Activated CD4-positive, alpha-beta memory T cell treated with anti-CD3 and anti-CD28 coated beads for 36 hours (primary cell): ENCODE measurements at regions of chr1 and their contacts with region 1.

Region 1: DNA sequence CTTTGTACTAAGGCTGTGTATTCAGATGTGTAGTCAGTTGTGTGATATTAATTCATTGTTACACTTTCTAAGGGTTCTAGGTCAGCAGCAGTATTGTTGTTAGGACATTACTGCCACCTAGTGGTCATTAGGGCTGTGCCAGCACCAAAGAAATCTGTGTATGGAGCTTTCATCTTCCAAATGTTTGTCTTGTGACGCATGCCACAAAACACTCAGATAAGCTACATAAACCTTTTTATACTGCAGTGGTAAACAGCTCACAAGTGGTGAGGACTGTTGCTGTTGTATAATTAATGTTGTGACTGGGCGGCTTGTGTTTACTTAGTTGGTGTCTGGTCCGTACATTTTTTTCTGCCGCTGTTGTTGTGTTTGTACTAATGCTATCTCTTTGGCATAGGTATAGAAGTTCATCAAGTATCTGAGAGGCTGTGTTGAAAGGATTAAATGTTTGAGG is 51.7 kb downstream of the S1PR1 start:
- DNase-seq: peak; percentile 78
- H3K4me3 Mint-ChIP-seq: no peak overlapping the region
- H3K27ac Mint-ChIP-seq: peak overlapping the region; percentile 66
- H3K4me1 Mint-ChIP-seq: peaks cover 80% of the 10 kb centered on the region
- H3K27me3 Mint-ChIP-seq: no peaks in the 10 kb centered on the region

Region 2: DNA sequence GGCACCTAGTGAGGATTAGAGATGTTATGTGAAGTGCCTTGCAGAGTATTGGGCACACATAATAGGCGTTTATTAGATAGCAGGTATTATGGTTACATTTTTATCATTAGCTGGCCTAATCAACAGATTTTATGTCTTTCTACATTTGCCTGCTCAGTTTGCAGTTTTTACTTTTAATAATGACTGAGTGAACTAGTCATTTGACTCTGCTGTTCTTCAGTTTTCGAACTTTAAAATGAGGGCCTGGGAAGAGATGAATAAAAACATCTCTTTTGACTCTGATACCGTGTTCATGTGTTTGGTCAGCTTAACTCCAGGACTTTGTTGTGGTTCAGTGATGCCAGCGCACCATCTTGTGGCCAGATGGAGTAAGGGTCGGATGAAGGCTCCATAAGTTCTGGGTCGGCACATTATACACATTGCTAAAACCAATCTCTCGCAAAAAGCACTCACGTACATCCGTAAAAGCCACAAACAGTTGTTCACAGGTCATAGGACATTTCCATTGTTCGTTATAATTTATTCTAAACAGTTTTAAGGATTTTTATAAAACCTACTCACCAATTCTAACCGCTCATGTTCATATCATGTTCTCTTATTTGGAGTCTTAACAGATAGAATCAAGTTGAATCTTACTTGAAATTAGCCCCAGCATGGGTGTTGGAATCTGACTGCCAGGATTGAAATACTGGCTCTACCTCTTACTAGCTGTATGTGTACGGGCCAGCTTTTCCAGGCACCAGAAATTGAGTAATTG is 829.0 kb before region 1 on chr1:
- CTCF ChIA-PET with region 1: interaction called, 4 read pairs
- POLR2A ChIA-PET with region 1: no interaction called
- intact Hi-C with region 1: loop called (anchors 5 kb)
- DNase-seq: peak; percentile 88
- H3K4me3 Mint-ChIP-seq: peak overlapping the region; percentile 17
- H3K27ac Mint-ChIP-seq: peak overlapping the region; percentile 73
- H3K4me1 Mint-ChIP-seq: peaks cover 58% of the 10 kb centered on the region
- H3K27me3 Mint-ChIP-seq: no peaks in the 10 kb centered on the region

Region 3: GRCh38 chr1:100955322-100955721 is 333.2 kb before region 1 on chr1:
- CTCF ChIA-PET with region 1: interaction called, 7 read pairs
- POLR2A ChIA-PET with region 1: no interaction called
- intact Hi-C with region 1: loop called (anchors 1 kb)
- DNase-seq: no peak
- H3K4me3 Mint-ChIP-seq: no peak overlapping the region
- H3K27ac Mint-ChIP-seq: peak overlapping the region; percentile 56
- H3K4me1 Mint-ChIP-seq: peaks cover 48% of the 10 kb centered on the region
- H3K27me3 Mint-ChIP-seq: no peaks in the 10 kb centered on the region

Region 4: DNA sequence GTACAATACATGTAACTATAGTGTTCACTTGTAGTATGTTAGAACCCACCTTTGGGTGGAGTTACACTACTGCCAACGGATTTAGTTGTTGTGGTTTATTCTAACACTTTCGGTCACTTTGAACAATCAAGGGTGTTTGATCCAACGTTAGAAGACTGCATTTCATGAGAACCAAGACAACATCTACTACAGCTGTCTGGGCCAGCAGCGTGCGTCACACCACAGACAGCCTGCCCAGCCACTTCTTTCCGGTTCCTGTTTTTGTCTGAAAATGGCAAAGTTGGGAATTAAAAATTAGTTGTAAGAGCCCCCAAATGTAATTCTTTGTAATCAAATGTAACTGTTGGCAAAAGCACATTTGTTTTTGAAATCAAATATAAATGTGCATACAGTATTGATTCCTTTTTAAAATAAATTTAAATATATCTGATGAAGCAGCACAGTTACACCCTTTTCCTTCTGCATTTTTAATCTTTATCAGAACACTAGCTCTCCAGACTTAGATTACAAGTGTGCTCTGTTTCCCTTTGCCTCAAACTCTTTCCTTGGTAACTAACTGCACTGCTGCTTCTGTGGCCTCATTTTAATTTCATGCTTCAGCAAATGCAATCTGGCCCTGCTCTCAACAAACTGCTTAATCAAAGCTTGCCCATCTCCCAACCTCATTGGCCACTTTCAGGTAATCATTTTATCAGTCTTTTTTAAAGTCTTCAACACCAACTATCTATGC is 176.3 kb before region 1 on chr1:
- CTCF ChIA-PET with region 1: interaction called, 4 read pairs
- POLR2A ChIA-PET with region 1: interaction called, 4 read pairs
- intact Hi-C with region 1: loop called (anchors 2 kb)
- DNase-seq: peak; percentile 76
- H3K4me3 Mint-ChIP-seq: peak overlapping the region; percentile 25
- H3K27ac Mint-ChIP-seq: peak overlapping the region; percentile 87
- H3K4me1 Mint-ChIP-seq: peaks cover 56% of the 10 kb centered on the region
- H3K27me3 Mint-ChIP-seq: no peaks in the 10 kb centered on the region

Region 5: GRCh38 chr1:101238681-101239094 is 49.8 kb before region 1 on chr1:
- CTCF ChIA-PET with region 1: interaction called, 242 read pairs
- POLR2A ChIA-PET with region 1: interaction called, 129 read pairs
- intact Hi-C with region 1: loop called (anchors 1 kb)
- DNase-seq: peak; percentile 95
- H3K4me3 Mint-ChIP-seq: peak overlapping the region; percentile 94
- H3K27ac Mint-ChIP-seq: peak overlapping the region; percentile 100
- H3K4me1 Mint-ChIP-seq: peaks cover 47% of the 10 kb centered on the region
- H3K27me3 Mint-ChIP-seq: peaks cover 2% of the 10 kb centered on the region

Region 6: DNA sequence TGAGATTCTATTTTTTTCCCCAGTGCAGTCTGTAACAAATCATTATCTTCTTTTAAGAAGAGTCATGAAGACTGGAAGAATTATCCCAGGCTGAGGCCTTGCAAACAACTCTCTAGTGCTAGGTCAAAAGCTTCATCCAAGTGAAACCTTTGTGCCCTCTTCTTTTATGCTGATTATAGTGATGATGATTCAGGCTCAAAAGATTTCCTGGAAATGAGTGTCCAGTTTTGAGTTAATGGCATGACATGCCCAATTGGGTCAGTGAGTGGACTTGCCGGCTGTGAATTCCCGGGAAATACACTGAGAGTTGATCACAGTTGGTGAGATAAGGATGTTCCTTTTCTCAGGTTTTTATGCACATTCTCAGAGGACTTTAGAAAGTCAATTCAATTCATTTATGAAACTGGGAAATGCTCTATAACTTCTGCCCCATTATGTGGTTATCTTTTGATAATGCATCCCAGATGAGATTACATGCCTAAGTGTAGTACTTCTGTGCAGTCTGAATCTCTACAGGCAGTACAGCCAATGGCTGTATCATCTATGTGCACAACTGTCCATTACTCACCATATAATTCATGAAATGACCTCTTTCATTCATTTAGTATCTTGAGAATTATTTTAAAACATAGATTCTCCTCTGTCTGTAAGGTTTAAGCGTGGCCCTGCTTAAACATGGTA is 14.5 kb after region 1 on chr1:
- CTCF ChIA-PET with region 1: interaction called, 20 read pairs
- POLR2A ChIA-PET with region 1: interaction called, 3 read pairs
- intact Hi-C with region 1: no loop called
- DNase-seq: no peak
- H3K4me3 Mint-ChIP-seq: no peak overlapping the region
- H3K27ac Mint-ChIP-seq: no peak overlapping the region
- H3K4me1 Mint-ChIP-seq: peaks cover 36% of the 10 kb centered on the region
- H3K27me3 Mint-ChIP-seq: no peaks in the 10 kb centered on the region

Region 7: DNA sequence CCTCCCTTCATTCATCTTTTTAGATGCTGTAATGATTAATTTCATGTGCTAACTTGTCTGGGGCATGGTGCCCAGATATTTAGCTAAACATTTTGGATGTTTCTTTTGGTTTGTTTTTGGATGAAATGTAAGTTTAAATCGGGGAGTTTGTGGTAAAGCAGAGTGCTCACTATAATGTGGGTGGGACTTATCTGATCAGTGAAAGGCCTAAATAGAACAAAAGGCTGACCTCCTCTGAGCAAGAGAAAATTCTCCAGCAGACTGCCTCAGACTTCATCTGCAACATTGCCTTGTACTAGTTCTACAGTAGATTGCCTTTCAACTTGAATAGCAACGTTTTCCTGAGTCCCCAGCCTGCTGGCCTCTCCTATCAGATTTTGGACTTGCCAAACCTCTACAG is 131.9 kb after region 1 on chr1:
- CTCF ChIA-PET with region 1: no interaction called
- POLR2A ChIA-PET with region 1: no interaction called
- intact Hi-C with region 1: no loop called
- DNase-seq: no peak
- H3K4me3 Mint-ChIP-seq: no peak overlapping the region
- H3K27ac Mint-ChIP-seq: no peak overlapping the region
- H3K4me1 Mint-ChIP-seq: no peaks in the 10 kb centered on the region
- H3K27me3 Mint-ChIP-seq: no peaks in the 10 kb centered on the region

Region 8: DNA sequence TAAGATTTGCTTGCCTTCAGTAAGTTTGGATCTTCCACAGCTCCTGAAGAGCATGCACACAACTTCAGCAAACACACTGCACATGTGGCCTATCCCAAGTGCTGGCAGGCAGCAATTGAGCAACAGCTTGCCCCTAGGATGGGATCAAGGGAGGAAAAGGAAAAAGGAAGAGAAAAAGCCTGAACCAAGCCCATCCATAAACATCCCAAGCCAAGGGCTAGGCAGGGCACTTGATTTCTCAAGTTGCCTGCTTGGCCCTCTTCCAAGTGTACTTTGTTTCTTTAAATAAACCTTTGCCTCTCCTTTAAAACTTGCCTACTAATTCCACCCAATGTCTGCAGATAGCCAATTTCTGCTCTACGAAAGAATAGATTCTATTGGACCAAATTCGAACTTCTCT is 757.2 kb after region 1 on chr1:
- CTCF ChIA-PET with region 1: no interaction called
- POLR2A ChIA-PET with region 1: no interaction called
- intact Hi-C with region 1: no loop called
- DNase-seq: no peak
- H3K4me3 Mint-ChIP-seq: no peak overlapping the region
- H3K27ac Mint-ChIP-seq: no peak overlapping the region
- H3K4me1 Mint-ChIP-seq: no peaks in the 10 kb centered on the region
- H3K27me3 Mint-ChIP-seq: no peaks in the 10 kb centered on the region